Activated CD4-positive, alpha-beta T cell treated with anti-CD3 and anti-CD28 coated beads, Interleukin-2, amount 10 ng/mL, durations not matched to agents 7 days and 5 days (primary cell): ENCODE measurements at regions of chr2 and their contacts with region 1.

Region 1: GRCh38 chr2:19888831-19889230 is 13.0 kb downstream of the TTC32 start:
- DNase-seq: no peak
- H3K4me3 Mint-ChIP-seq: no peak overlapping the region
- H3K27ac Mint-ChIP-seq: no peak overlapping the region
- H3K4me1 Mint-ChIP-seq: peaks cover 19% of the 10 kb centered on the region
- H3K27me3 Mint-ChIP-seq: no peaks in the 10 kb centered on the region

Region 2: DNA sequence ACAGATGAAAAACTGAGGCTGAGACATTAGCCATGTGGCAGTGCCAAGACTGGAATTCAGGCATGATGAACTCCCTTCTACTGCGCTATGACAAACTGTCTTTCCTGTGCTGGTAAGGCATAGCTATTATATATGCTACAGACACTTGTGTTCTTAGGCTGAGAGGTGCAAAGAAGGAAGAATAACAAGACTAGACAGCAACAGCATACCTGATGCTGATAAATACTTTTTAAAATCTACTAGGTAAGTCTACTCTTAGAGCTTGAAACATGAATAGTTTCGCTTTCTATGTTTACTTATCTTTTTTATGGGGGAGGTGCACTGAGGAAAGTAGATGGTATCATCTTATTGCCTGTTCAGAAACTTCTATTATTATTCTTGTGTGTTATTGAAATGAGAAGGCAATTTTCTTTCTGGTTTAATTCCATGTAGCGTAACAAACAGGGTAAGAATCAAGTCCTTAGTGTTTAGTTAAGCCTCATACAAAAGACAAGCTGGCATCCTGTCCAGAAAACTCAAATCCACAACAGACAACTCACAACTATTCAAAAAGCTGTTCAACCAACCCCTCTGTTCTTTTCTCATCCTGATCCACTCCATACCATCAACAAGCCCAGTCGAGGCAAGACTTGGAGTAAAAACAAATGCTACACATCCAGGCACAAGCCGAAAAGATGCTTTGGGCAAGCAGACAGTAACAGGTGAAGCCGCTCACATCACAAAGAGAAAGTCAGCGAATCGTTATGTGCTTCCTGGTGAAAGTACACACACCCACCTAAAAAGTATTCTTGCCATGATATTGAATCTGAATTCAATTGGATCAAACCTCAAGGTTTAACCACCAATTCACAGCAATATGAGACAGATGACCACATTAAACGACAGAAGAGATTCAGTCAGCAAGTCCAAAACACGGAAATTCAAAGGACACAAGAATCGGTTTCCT is 11.4 kb after region 1 on chr2:
- CTCF ChIA-PET with region 1: interaction called, 12 read pairs
- POLR2A ChIA-PET with region 1: no interaction called
- DNase-seq: peak; percentile 44
- H3K4me3 Mint-ChIP-seq: peak overlapping the region; percentile 88
- H3K27ac Mint-ChIP-seq: peak overlapping the region; percentile 96
- H3K4me1 Mint-ChIP-seq: peaks cover 45% of the 10 kb centered on the region
- H3K27me3 Mint-ChIP-seq: peaks cover 8% of the 10 kb centered on the region